ENCODE measurements at regions of chr6 and their contacts with region 1.

Region 1: GRCh38 chr6:157823001-157823527 is at the start of gene SNX9:
- DNase-seq: peak; percentile 85 to 92 (median 87)
- ATAC-seq: peak; percentile 77 to 96 (median 90)
- H3K4me3 ChIP-seq: peak within 1 kb of the TSS; percentile 74 to 99 (median 94)
- H3K27ac ChIP-seq: peak within 1 kb of the TSS; percentile 92 to 98 (median 96)
- H3K4me1 ChIP-seq: peaks cover 0 to 41% (median 22%) of the 10 kb centered on the region in 12 donors
- H3K27me3 ChIP-seq: no peaks in the 10 kb centered on the region
- CTCF ChIP-seq: peak in 1 of 12 donors; percentile 11
- POLR2A ChIP-seq: peak in 1 of 2 donors; percentile 60
- total RNA-seq, gene SNX9: 27.6 to 44.0 (median 32.7) TPM

Region 2: GRCh38 chr6:157861814-157862213 is 38.8 kb after region 1 on chr6:
- intact Hi-C with region 1: loop called in 1 of 10 experiments (anchors 5 kb)
- DNase-seq: no peak
- ATAC-seq: peak in 3 of 4 donors; percentile 43 to 72 (median 63)
- H3K4me3 ChIP-seq: no peak overlapping the region
- H3K27ac ChIP-seq: no peak overlapping the region
- H3K4me1 ChIP-seq: peaks cover 0 to 47% (median 39%) of the 10 kb centered on the region in 12 donors
- H3K27me3 ChIP-seq: no peaks in the 10 kb centered on the region
- CTCF ChIP-seq: no peak
- POLR2A ChIP-seq: no peak